ENCODE measurements at regions of chr9 and their contacts with region 1.

Region 1: GRCh38 chr9:77163884-77164283 is 13.4 kb upstream of the VPS13A start:
- DNase-seq: no peak
- H3K4me3 Mint-ChIP-seq: no peak overlapping the region
- H3K27ac Mint-ChIP-seq: no peak overlapping the region
- H3K4me1 Mint-ChIP-seq: peaks cover 2% of the 10 kb centered on the region
- H3K27me3 Mint-ChIP-seq: peaks cover 5% of the 10 kb centered on the region

Region 2: GRCh38 chr9:76027416-76027815 is 1136.5 kb before region 1 on chr9:
- CTCF ChIA-PET with region 1: no interaction called
- intact Hi-C with region 1: no loop called
- DNase-seq: peak; percentile 18
- H3K4me3 Mint-ChIP-seq: no peak overlapping the region
- H3K27ac Mint-ChIP-seq: peak overlapping the region; percentile 6
- H3K4me1 Mint-ChIP-seq: peaks cover 70% of the 10 kb centered on the region
- H3K27me3 Mint-ChIP-seq: no peaks in the 10 kb centered on the region

Region 3: DNA sequence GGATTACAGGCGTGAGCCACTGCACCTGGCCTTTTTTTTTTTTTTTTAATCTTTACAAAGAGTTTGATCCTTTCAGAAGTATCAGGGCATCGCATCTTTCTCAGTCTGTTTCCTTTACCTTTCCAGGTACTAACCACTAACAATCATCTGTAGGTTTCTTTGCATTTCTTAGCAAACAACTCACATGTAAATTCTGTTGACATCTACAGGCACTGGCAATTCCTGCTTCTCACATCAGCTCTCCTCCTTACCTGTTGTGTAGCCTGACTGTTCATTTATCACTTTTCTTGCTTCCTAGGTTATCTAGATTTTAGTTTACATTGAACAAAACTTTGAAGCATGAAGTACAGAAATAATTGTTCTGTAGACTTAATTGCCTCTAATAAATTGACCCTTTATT is 14.0 kb before region 1 on chr9:
- CTCF ChIA-PET with region 1: interaction called, 10 read pairs
- intact Hi-C with region 1: no loop called
- DNase-seq: no peak
- H3K4me3 Mint-ChIP-seq: no peak overlapping the region
- H3K27ac Mint-ChIP-seq: no peak overlapping the region
- H3K4me1 Mint-ChIP-seq: no peaks in the 10 kb centered on the region
- H3K27me3 Mint-ChIP-seq: peaks cover 14% of the 10 kb centered on the region

Region 4: GRCh38 chr9:77215874-77216273 is 52.0 kb after region 1 on chr9:
- CTCF ChIA-PET with region 1: interaction called, 5 read pairs
- intact Hi-C with region 1: loop called (anchors 1 kb)
- DNase-seq: no peak
- H3K4me3 Mint-ChIP-seq: no peak overlapping the region
- H3K27ac Mint-ChIP-seq: no peak overlapping the region
- H3K4me1 Mint-ChIP-seq: no peaks in the 10 kb centered on the region
- H3K27me3 Mint-ChIP-seq: no peaks in the 10 kb centered on the region

Region 5: GRCh38 chr9:77488439-77489126 is 324.7 kb after region 1 on chr9:
- CTCF ChIA-PET with region 1: interaction called, 4 read pairs
- intact Hi-C with region 1: loop called (anchors 1 kb)
- DNase-seq: peak; percentile 12
- H3K4me3 Mint-ChIP-seq: no peak overlapping the region
- H3K27ac Mint-ChIP-seq: no peak overlapping the region
- H3K4me1 Mint-ChIP-seq: peaks cover 11% of the 10 kb centered on the region
- H3K27me3 Mint-ChIP-seq: no peaks in the 10 kb centered on the region

Region 6: DNA sequence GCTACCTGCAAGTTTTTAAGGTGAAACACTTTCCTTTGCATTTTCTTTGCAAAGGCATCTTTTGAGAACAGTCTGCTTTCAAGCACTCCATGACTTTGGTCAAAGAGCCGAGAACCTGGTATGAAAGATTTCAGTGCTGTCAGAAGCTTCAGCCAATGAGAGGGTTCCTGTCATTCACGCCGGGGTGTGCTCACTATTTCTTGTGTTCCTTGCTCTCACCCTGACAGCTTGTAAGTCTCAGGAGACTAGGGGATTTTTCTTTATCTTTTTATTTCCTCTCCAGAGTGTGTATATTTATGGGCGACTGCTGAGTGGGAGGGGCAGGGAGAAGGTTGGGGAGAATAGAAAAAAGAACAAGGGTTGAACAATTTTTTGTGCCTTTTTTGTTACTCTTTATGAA is 1467.1 kb after region 1 on chr9:
- CTCF ChIA-PET with region 1: no interaction called
- intact Hi-C with region 1: no loop called
- DNase-seq: no peak
- H3K4me3 Mint-ChIP-seq: no peak overlapping the region
- H3K27ac Mint-ChIP-seq: no peak overlapping the region
- H3K4me1 Mint-ChIP-seq: no peaks in the 10 kb centered on the region
- H3K27me3 Mint-ChIP-seq: no peaks in the 10 kb centered on the region

Measured in activated naive CD4-positive, alpha-beta T cell treated with anti-CD3 and anti-CD28 coated beads for 36 hours (primary cell).